Esophagus muscularis mucosa (tissue), 4 donors: ENCODE measurements at regions of chr10 and their contacts with region 1.

Region 1: DNA sequence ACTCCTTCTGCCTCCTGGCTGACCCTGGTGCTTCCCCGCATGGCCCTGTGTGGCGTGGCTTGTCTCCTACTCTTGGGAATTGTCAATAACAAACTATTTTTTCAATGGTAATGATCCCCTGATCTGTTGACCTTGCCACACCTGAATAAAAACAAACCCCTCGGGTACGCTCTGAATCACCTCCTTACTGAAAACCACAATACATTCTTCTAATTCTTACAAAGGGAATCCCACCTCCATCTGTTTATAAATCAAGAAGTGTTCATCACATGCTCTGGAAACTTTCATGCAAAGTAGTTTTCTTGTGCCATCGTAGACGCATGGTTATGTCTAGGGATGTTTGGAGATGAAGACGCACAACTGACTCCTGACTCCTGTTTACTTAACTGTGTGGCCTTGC is 245.8 kb downstream of the FRMD4A start:
- DNase-seq: no peak
- H3K4me3 ChIP-seq: no peak overlapping the region
- H3K27ac ChIP-seq: no peak overlapping the region
- H3K4me1 ChIP-seq: peaks cover 0 to 8% (median 2%) of the 10 kb centered on the region in 4 donors
- H3K27me3 ChIP-seq: no peaks in the 10 kb centered on the region
- CTCF ChIP-seq: no peak
- EP300 ChIP-seq: no peak
- POLR2A ChIP-seq: no peak

Region 2: GRCh38 chr10:13945390-13946208 is 139.3 kb before region 1 on chr10:
- intact Hi-C with region 1: no loop called
- DNase-seq: no peak
- H3K4me3 ChIP-seq: no peak overlapping the region
- H3K27ac ChIP-seq: peak overlapping the region; percentile 13 to 47 (median 30)
- H3K4me1 ChIP-seq: peaks cover 7 to 21% (median 18%) of the 10 kb centered on the region in 4 donors
- H3K27me3 ChIP-seq: no peaks in the 10 kb centered on the region
- CTCF ChIP-seq: no peak
- EP300 ChIP-seq: no peak
- POLR2A ChIP-seq: no peak

Region 3: DNA sequence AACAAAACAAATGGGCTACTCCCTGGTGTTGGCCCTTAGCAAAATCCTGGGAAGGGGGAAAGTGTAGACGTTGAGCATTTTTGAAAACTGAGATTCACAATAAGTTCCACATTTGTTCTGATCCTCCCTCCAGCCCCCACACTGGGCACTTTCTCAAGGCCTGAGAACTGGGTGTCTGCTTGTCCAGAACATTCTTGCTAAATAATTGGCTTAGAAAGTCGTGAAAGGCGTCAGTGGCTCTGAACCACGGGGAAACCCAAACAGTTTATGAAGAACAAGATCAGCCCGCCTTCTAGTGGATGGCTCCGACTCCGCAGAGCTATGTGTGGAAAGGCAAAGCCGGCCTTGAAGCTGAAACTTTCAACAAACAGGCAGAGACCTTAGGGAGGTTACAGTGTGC is 128.0 kb before region 1 on chr10:
- intact Hi-C with region 1: loop called (anchors 5 kb)
- DNase-seq: peak; percentile 94
- H3K4me3 ChIP-seq: peak overlapping the region in 1 of 4 donors; percentile 1
- H3K27ac ChIP-seq: peak overlapping the region; percentile 66 to 79 (median 76)
- H3K4me1 ChIP-seq: peaks cover 17 to 62% (median 55%) of the 10 kb centered on the region in 4 donors
- H3K27me3 ChIP-seq: no peaks in the 10 kb centered on the region
- CTCF ChIP-seq: peak; percentile 66 to 73 (median 70)
- EP300 ChIP-seq: no peak
- POLR2A ChIP-seq: no peak